CD4-positive, alpha-beta memory T cell (primary cell): ENCODE measurements at regions of chr13 and their contacts with region 1.

Region 1: GRCh38 chr13:30972832-30973377 is 40.4 kb downstream of the TEX26 start:
- DNase-seq: no peak
- H3K4me3 ChIP-seq: no peak overlapping the region
- H3K4me3 Mint-ChIP-seq: no peak overlapping the region
- H3K27ac ChIP-seq: no peak overlapping the region
- H3K27ac Mint-ChIP-seq: no peak overlapping the region
- H3K4me1 ChIP-seq: no peaks in the 10 kb centered on the region
- H3K4me1 Mint-ChIP-seq: no peaks in the 10 kb centered on the region
- H3K27me3 ChIP-seq: no peaks in the 10 kb centered on the region
- H3K27me3 Mint-ChIP-seq: peaks cover 19 to 25% of the 10 kb centered on the region in 2 donors

Region 2: GRCh38 chr13:30985637-30986205 is 12.8 kb after region 1 on chr13:
- CTCF ChIA-PET with region 1: no interaction called
- POLR2A ChIA-PET with region 1: no interaction called
- intact Hi-C with region 1: loop called (anchors 1 kb)
- DNase-seq: no peak
- H3K4me3 ChIP-seq: no peak overlapping the region
- H3K4me3 Mint-ChIP-seq: no peak overlapping the region
- H3K27ac ChIP-seq: no peak overlapping the region
- H3K27ac Mint-ChIP-seq: no peak overlapping the region
- H3K4me1 ChIP-seq: no peaks in the 10 kb centered on the region
- H3K4me1 Mint-ChIP-seq: no peaks in the 10 kb centered on the region
- H3K27me3 ChIP-seq: no peaks in the 10 kb centered on the region
- H3K27me3 Mint-ChIP-seq: peaks cover under 1 to 9% of the 10 kb centered on the region in 2 donors